Activated CD4-positive, alpha-beta memory T cell treated with anti-CD3 and anti-CD28 coated beads for 36 hours (primary cell): ENCODE measurements at regions of chr5 and their contacts with region 1.

Region 1: DNA sequence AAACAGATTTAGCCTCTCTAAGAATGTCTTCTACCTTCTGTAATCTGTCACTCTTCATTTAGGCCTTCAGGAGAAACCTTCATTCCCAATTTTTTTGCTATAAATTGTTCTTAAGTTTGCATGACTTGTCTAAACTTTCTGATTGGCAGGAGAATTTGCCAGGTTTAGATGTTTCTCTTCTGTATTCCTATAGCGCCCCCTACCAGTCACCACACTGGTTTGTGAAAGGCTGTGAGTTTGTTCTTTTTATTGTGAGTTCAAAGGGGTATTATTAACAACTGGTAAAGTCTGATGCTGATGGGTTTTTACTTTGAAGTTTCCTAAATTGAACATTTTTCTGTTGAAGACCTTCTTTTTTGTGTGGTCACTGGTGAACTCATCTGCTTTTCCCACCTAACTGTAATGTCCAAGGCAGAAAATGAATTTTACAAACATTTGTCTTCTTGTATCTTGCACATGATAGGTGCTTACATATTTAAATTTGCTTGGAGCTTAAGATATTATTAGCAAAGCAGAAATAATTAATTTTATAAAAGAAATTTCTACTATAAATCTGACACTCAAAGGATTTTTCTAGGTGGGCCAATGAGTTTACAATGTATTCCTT is 18.4 kb upstream of the F2RL2 start:
- DNase-seq: peak; percentile 77
- H3K4me3 Mint-ChIP-seq: no peak overlapping the region
- H3K27ac Mint-ChIP-seq: no peak overlapping the region
- H3K4me1 Mint-ChIP-seq: peaks cover 4% of the 10 kb centered on the region
- H3K27me3 Mint-ChIP-seq: no peaks in the 10 kb centered on the region

Region 2: DNA sequence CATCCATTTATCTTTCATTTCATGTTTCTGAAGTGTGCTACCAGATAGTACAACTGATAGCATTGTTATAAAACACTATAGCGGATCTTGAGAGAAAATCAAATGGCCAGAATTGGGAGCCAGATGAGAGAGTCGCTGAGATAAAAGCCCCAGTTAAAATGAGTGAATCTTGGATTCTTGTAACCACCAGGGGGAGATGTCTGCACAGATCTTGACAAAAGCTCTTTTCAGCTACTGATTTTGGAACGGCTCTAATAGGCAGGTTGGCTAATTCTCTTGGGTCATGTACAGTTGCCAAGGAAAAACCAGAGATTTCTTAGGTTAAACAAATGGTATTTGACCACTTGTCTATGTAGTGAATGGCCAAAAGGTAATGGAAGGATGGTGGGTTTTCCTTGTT is 40.1 kb before region 1 on chr5:
- CTCF ChIA-PET with region 1: interaction called, 27 read pairs
- POLR2A ChIA-PET with region 1: no interaction called
- intact Hi-C with region 1: loop called (anchors 1 kb)
- DNase-seq: no peak
- H3K4me3 Mint-ChIP-seq: no peak overlapping the region
- H3K27ac Mint-ChIP-seq: no peak overlapping the region
- H3K4me1 Mint-ChIP-seq: peaks cover 11% of the 10 kb centered on the region
- H3K27me3 Mint-ChIP-seq: no peaks in the 10 kb centered on the region